Heart right ventricle (tissue), 16 donors: ENCODE measurements at regions of chr9 and their contacts with region 1.

Region 1: DNA sequence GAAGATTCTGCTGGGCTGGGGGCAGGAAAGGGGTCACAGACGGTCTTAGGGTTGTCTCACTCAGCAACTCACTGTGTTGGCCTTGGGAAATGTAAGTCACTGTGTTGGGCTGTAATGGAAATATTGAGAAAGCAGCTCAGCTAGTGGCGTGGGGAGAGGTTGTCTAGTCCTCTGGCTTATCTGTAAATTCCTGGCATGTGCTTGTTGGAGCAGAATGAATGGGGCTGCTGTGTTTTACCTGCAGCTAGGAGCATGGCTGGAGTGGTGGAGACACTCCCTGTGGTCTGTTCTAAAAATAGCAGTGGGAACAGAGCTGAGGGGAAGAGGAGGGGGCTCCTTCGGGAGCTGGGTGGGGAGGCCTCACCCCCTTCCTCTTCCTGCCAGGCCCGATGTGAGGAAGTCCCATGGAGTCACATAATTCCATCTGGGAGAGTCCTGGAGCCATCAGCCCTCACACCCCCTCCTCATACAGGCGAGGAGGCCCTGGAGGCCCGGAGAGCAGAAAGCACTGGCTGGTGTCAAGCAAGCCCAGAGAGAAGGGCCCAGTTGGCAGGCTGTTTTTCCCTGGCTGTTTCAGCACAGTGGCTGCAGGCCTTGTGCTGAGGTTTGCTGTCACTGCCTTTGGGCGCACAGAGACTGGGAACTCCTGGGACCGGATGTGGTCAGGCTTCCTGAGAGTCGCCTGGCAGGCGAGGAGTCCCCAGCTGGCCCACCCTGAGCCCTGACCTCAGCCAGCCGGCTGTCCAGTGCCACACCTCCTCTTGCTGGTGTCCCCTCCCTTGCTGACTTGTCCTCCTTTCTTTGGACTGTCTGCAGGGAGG is 84.9 kb downstream of the RGS3 start:
- DNase-seq: peak; percentile 73 to 79
- ATAC-seq: peak; percentile 85 to 95 (median 92)
- H3K4me3 ChIP-seq: peak overlapping the region in 1 of 10 donors; percentile 0
- H3K27ac ChIP-seq: peak overlapping the region; percentile 70 to 91 (median 84)
- H3K4me1 ChIP-seq: peaks cover 15 to 73% (median 52%) of the 10 kb centered on the region in 9 donors
- H3K27me3 ChIP-seq: no peaks in the 10 kb centered on the region
- CTCF ChIP-seq: no peak

Region 2: DNA sequence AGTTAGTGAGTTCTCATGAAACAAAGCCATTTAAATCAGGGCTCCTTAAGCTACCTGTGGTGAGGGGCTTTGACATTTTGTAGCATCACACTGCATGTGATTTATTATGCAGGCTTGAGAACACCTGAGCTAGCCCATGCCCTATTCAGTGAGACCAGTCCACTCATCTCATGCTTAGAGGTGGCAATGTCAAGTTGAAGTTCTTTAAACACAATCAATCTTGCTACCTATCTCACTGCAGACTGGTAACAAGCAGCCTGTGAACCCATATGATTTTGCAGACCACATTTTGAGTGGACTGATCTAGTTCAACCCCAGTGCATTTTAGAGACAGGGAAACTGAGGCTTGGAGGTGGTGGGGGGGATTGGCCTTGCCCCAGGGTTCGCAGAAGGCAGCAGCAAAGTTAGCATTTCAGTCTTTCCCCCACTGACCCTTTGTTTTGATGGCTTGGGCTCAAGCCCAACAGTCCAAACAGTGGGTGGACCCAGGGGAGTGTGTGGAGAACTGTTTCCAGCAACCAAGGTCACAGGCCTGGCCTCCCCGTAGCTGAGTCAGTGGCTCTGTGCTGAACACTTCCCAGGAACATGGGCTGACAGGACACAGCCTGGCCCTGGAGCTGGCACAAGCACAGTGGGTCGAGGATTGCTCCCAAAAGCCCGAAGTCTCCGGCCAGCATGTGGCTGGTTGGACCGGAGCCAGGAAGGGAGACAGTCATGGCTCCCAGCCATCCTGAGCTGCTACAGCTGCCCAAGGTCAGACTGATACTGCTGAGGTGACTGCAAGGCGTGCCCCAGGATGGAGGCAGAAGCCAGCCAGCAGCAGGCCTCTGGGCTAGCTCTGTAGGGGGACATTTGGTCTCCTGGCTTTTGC is 10.4 kb after region 1 on chr9:
- intact Hi-C with region 1: loop called in 1 of 10 experiments (anchors 1 kb)
- DNase-seq: peak; percentile 89 to 90
- ATAC-seq: peak; percentile 92 to 98 (median 95)
- H3K4me3 ChIP-seq: no peak overlapping the region
- H3K27ac ChIP-seq: peak overlapping the region; percentile 60 to 97 (median 81)
- H3K4me1 ChIP-seq: peaks cover 8 to 74% (median 46%) of the 10 kb centered on the region in 9 donors
- H3K27me3 ChIP-seq: no peaks in the 10 kb centered on the region
- CTCF ChIP-seq: no peak

Region 3: DNA sequence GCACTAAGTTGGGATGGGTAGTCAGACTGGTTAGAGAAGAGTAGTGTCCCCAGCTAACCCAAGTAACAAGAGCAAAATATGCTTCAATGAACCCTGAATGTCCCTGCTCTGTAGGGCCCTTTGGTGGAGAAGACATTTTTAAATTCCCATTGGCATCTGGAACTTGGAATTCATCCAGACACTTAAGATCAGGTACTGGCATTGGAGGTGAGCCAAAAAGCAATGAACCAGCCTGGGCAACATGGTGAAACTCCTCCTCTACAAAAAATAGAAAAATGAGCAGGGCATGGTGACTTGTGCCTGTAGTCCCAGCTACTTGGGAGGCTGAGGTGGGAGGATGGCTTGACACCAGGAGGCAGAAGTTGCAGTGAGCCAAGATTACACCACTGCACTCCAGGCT is 268.7 kb after region 1 on chr9:
- intact Hi-C with region 1: no loop called
- DNase-seq: no peak
- ATAC-seq: no peak
- H3K4me3 ChIP-seq: no peak overlapping the region
- H3K27ac ChIP-seq: no peak overlapping the region
- H3K4me1 ChIP-seq: no peaks in the 10 kb centered on the region
- H3K27me3 ChIP-seq: peaks cover 0 to 27% (median 6%) of the 10 kb centered on the region in 7 donors
- CTCF ChIP-seq: no peak